ENCODE measurements at regions of chr19 and their contacts with region 1.

Region 1: GRCh38 chr19:8654591-8655339 is 24.3 kb downstream of the NFILZ start:
- DNase-seq: peak; percentile 76
- ATAC-seq: peak; percentile 69
- H3K4me3 Mint-ChIP-seq: peak overlapping the region; percentile 35
- H3K27ac Mint-ChIP-seq: peak overlapping the region; percentile 19
- H3K4me1 Mint-ChIP-seq: peaks cover 23% of the 10 kb centered on the region
- H3K27me3 Mint-ChIP-seq: peaks cover 8% of the 10 kb centered on the region

Region 2: DNA sequence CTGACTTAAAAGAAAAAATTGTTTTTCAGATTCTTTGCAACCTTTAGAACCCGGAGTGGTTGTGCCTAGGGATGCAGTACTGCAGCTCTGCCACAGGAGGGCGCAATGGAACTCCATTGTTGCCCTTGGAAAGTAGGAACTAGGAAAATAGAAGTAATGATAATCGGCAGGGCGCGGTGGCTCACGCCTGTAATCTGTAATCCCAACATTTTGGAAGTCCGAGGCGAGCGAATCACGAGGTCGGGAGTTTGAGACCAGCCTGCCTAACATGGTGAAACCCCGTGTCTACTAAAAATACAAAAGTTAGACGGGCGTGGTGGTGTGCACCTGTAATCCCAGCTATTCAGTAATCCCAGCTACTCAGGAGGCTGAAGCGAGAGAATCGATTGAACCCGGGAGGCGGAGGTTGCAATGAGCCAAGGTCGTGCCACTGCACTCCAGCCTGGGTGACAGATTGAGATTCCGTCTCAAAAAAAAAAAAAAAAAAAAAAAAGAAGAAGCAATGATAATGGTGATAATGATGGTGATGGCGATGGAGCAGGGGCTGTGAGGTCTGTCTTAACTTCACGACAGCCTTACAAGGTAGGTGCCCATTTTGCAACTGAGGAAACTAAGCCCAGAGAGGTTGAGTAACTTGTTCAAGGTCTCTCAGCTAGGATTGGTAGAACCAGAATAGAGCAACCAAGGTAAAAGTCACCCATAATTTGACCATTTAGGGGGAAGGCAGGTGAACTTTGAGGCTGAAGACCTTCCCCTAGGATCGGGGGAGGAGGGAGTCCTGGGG is 38.8 kb before region 1 on chr19:
- CTCF ChIA-PET with region 1: interaction called, 12 read pairs
- DNase-seq: peak; percentile 73
- ATAC-seq: no peak
- H3K4me3 Mint-ChIP-seq: no peak overlapping the region
- H3K27ac Mint-ChIP-seq: no peak overlapping the region
- H3K4me1 Mint-ChIP-seq: peaks cover 3% of the 10 kb centered on the region
- H3K27me3 Mint-ChIP-seq: peaks cover 4% of the 10 kb centered on the region

Region 3: GRCh38 chr19:8641908-8642547 is 12.7 kb before region 1 on chr19:
- CTCF ChIA-PET with region 1: interaction called, 25 read pairs
- DNase-seq: no peak
- ATAC-seq: no peak
- H3K4me3 Mint-ChIP-seq: no peak overlapping the region
- H3K27ac Mint-ChIP-seq: no peak overlapping the region
- H3K4me1 Mint-ChIP-seq: peaks cover 10% of the 10 kb centered on the region
- H3K27me3 Mint-ChIP-seq: peaks cover 11% of the 10 kb centered on the region

Region 4: GRCh38 chr19:8684001-8684902 is 29.5 kb after region 1 on chr19:
- CTCF ChIA-PET with region 1: interaction called, 48 read pairs
- DNase-seq: no peak
- ATAC-seq: no peak
- H3K4me3 Mint-ChIP-seq: no peak overlapping the region
- H3K27ac Mint-ChIP-seq: no peak overlapping the region
- H3K4me1 Mint-ChIP-seq: peaks cover 35% of the 10 kb centered on the region
- H3K27me3 Mint-ChIP-seq: peaks cover 12% of the 10 kb centered on the region

Region 5: GRCh38 chr19:8697671-8698432 is 43.1 kb after region 1 on chr19:
- CTCF ChIA-PET with region 1: interaction called, 127 read pairs
- DNase-seq: no peak
- ATAC-seq: no peak
- H3K4me3 Mint-ChIP-seq: no peak overlapping the region
- H3K27ac Mint-ChIP-seq: no peak overlapping the region
- H3K4me1 Mint-ChIP-seq: peaks cover 35% of the 10 kb centered on the region
- H3K27me3 Mint-ChIP-seq: peaks cover 19% of the 10 kb centered on the region

Measured in activated CD8-positive, alpha-beta memory T cell treated with anti-CD3 and anti-CD28 coated beads, Interleukin-2, amount 10 ng/mL, durations not matched to agents 7 days and 5 days (primary cell).